ENCODE measurements at regions of chr3 and their contacts with region 1.

Region 1: GRCh38 chr3:117355566-117355965 is 646.0 kb downstream of the TUSC7 start:
- DNase-seq: no peak
- ATAC-seq: no peak
- H3K4me3 ChIP-seq: no peak overlapping the region
- H3K27ac ChIP-seq: no peak overlapping the region
- H3K4me1 ChIP-seq: no peaks in the 10 kb centered on the region
- H3K27me3 ChIP-seq: no peaks in the 10 kb centered on the region
- CTCF ChIP-seq: no peak
- POLR2A ChIP-seq: no peak

Region 2: GRCh38 chr3:117059067-117059955 is 296.3 kb before region 1 on chr3:
- in situ Hi-C with region 1: loop called in 1 of 4 experiments (anchors 10 kb)
- intact Hi-C with region 1: no loop called
- DNase-seq: no peak
- ATAC-seq: no peak
- H3K4me3 ChIP-seq: no peak overlapping the region
- H3K27ac ChIP-seq: no peak overlapping the region
- H3K4me1 ChIP-seq: no peaks in the 10 kb centered on the region
- H3K27me3 ChIP-seq: no peaks in the 10 kb centered on the region
- CTCF ChIP-seq: peak in 2 of 5 experiments; percentile 36
- POLR2A ChIP-seq: no peak

Measured in gastrocnemius medialis (tissue), 4 donors.